ENCODE measurements at regions of chr3 and their contacts with region 1.

Region 1: DNA sequence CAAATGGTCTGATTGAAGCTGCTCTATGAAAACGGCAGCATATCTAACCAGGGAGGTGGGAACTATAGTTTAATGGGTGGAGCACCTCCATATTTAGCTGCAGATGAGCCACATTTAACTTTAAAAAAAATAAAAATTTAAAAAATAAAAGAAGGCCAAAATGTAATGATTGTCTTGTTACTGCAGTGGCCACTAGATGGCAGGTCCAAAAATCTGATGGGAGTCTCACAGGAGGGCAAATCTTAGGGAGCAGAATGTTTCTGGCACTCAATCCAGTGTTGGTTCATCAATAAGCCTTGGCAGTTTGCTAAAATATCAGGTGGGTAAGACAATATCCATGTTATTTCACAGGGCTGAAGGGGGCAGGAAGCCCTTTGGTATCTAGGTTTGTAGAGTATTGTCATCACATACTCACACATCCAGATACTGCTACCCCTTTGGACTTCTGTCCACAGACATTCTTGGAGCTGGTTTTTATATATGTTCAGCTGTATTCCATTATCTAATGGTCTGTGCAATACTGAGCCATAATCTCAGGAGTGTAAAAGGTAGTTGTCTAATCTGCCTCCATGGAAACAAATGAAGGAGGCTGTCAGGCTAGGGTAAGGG is 233.3 kb downstream of the TIGIT start:
- DNase-seq: no peak
- H3K4me3 ChIP-seq: no peak overlapping the region
- CTCF ChIP-seq: no peak
- POLR2A ChIP-seq: no peak

Region 2: DNA sequence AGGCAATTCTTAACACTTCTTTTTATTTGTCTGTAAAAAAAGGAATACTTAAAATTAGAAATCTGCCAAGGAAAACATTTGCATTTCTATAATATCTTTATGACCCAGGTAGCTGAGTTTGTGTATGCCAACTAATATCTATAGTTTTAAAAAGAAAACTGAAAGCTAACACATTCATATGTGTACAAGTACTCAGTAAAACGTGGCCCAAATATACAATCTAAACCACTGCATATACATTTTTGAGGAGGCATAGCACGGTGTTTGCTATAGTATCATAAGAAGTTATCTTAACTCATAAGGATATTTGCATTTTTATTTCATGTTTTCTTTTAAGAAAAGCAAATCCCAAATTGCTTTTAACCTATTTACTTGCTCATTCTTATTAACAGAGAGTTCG is 447.2 kb after region 1 on chr3:
- intact Hi-C with region 1: loop called (anchors 10 kb)
- DNase-seq: no peak
- H3K4me3 ChIP-seq: no peak overlapping the region
- CTCF ChIP-seq: no peak
- POLR2A ChIP-seq: no peak

Measured in lower leg skin (tissue), 4 donors.